Endothelial cell of umbilical vein (primary cell): ENCODE measurements at regions of chr15 and their contacts with region 1.

Region 1: GRCh38 chr15:75809986-75810750 is 33.1 kb upstream of the UBE2Q2 start:
- DNase-seq: peak; percentile 37
- H3K4me3 ChIP-seq: no peak overlapping the region
- H3K27ac ChIP-seq: no peak overlapping the region
- H3K4me1 ChIP-seq: no peaks in the 10 kb centered on the region
- H3K27me3 ChIP-seq: peaks cover 10 to 18% of the 10 kb centered on the region in 2 experiments
- CTCF ChIP-seq: peak; percentile 32 to 35
- POLR2A ChIP-seq: no peak

Region 2: GRCh38 chr15:75758071-75758872 is 51.9 kb before region 1 on chr15:
- CTCF ChIA-PET with region 1: no interaction called
- POLR2A ChIA-PET with region 1: no interaction called
- dilution Hi-C with region 1: no loop called
- intact Hi-C with region 1: no loop called
- DNase-seq: peak; percentile 54
- H3K4me3 ChIP-seq: peak overlapping the region; percentile 25 to 54 (median 36)
- H3K27ac ChIP-seq: no peak overlapping the region
- H3K4me1 ChIP-seq: peaks cover 4% of the 10 kb centered on the region
- H3K27me3 ChIP-seq: peaks cover 0 to 1% of the 10 kb centered on the region in 2 experiments
- CTCF ChIP-seq: peak in 1 of 2 donors; percentile 35
- POLR2A ChIP-seq: no peak

Region 3: DNA sequence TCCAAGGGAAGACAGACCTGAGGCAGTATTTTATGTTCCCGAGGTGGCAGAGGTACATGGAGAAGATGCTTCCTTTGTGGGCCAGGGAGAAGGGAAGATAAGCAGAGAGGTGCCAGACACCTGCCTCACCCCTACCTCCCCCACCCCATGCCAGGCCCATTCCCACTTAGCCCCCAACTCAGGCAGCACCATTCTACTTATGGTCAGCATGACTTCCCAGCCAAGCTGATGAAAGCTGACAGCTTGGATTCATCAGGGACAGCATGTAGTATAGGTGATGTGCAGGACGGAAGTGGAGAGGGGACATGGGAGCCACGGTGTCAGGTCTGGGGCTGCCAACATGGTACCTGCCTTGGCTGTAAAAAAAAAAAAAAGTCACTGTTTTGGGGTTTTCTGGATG is 40.0 kb before region 1 on chr15:
- CTCF ChIA-PET with region 1: no interaction called
- POLR2A ChIA-PET with region 1: no interaction called
- dilution Hi-C with region 1: no loop called
- intact Hi-C with region 1: no loop called
- DNase-seq: no peak
- H3K4me3 ChIP-seq: no peak overlapping the region
- H3K27ac ChIP-seq: no peak overlapping the region
- H3K4me1 ChIP-seq: no peaks in the 10 kb centered on the region
- H3K27me3 ChIP-seq: peaks cover 11 to 17% of the 10 kb centered on the region in 2 experiments
- CTCF ChIP-seq: no peak
- POLR2A ChIP-seq: no peak

Region 4: DNA sequence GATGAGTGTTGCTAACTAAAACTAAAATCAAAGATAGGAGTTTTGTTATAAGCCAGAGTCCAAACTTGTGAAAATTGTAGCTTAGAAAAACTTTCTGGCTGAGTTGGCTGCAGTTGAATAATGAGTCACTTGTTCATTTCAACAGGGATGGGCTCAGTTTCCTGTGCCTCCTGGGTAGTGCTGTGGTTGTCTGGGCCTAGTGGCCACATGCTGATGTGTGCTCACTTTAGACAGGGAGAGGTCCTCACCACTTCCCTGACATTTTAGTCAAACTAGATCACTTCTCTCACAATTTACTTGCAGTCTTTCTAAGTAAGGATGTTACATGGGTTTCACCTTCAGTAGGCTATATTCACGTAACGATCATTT is 26.8 kb after region 1 on chr15:
- CTCF ChIA-PET with region 1: interaction called, 11 read pairs
- POLR2A ChIA-PET with region 1: no interaction called
- dilution Hi-C with region 1: no loop called
- intact Hi-C with region 1: no loop called
- DNase-seq: peak; percentile 42
- H3K4me3 ChIP-seq: no peak overlapping the region
- H3K27ac ChIP-seq: no peak overlapping the region
- H3K4me1 ChIP-seq: peaks cover 10% of the 10 kb centered on the region
- H3K27me3 ChIP-seq: no peaks in the 10 kb centered on the region
- CTCF ChIP-seq: no peak
- POLR2A ChIP-seq: no peak

Region 5: GRCh38 chr15:75921729-75922703 is 111.8 kb after region 1 on chr15:
- CTCF ChIA-PET with region 1: interaction called, 80 read pairs
- POLR2A ChIA-PET with region 1: no interaction called
- dilution Hi-C with region 1: no loop called
- intact Hi-C with region 1: loop called (anchors 1 kb)
- DNase-seq: peak; percentile 77
- H3K4me3 ChIP-seq: no peak overlapping the region
- H3K27ac ChIP-seq: no peak overlapping the region
- H3K4me1 ChIP-seq: peaks cover 12% of the 10 kb centered on the region
- H3K27me3 ChIP-seq: no peaks in the 10 kb centered on the region
- CTCF ChIP-seq: peak; percentile 34 to 44
- POLR2A ChIP-seq: no peak

Region 6: GRCh38 chr15:76057332-76058000 is 247.3 kb after region 1 on chr15:
- CTCF ChIA-PET with region 1: interaction called, 10 read pairs
- POLR2A ChIA-PET with region 1: no interaction called
- dilution Hi-C with region 1: no loop called
- intact Hi-C with region 1: no loop called
- DNase-seq: peak; percentile 49
- H3K4me3 ChIP-seq: no peak overlapping the region
- H3K27ac ChIP-seq: no peak overlapping the region
- H3K4me1 ChIP-seq: peaks cover 8% of the 10 kb centered on the region
- H3K27me3 ChIP-seq: peaks cover 35 to 58% of the 10 kb centered on the region in 2 experiments
- CTCF ChIP-seq: peak; percentile 51 to 67
- POLR2A ChIP-seq: no peak

Region 7: DNA sequence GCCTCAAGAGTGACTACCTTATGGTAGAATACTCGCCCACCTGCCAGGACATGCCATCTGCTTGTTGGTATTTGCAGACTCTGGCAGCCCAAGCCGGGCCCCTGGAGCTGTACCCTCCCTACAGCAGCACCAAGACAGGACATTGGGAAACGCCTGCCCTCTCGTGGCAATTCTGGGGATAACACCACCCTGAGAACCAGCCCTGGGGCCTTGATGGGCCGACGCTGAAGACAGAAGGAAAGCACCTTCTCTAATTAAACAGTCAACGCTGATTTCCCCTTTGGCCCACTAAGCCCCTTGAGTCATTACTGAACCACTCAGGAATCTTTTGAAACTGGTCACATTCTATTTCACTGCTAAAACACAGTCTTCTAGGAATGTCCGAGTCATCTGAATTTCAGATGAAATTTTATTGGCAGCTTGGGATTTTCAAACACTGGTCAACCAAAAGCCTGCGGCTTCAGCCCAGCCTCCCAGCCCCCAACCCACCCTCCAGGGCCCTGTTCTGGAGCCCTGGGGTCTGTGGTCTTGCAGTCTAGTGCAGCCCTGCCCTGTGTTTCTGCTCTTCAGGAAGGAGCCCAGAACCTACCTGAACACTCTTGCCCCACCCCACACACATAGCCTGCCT is 340.9 kb after region 1 on chr15:
- CTCF ChIA-PET with region 1: interaction called, 27 read pairs
- POLR2A ChIA-PET with region 1: no interaction called
- dilution Hi-C with region 1: no loop called
- intact Hi-C with region 1: no loop called
- DNase-seq: peak; percentile 77
- H3K4me3 ChIP-seq: no peak overlapping the region
- H3K27ac ChIP-seq: no peak overlapping the region
- H3K4me1 ChIP-seq: peaks cover 4% of the 10 kb centered on the region
- H3K27me3 ChIP-seq: peaks cover 7% of the 10 kb centered on the region in 2 experiments
- CTCF ChIP-seq: peak; percentile 77 to 94
- POLR2A ChIP-seq: no peak